Mammary epithelial cell (primary cell): ENCODE measurements at regions of chr6 and their contacts with region 1.

Region 1: GRCh38 chr6:35468181-35468979 is at the start of gene RPL10A:
- DNase-seq: peak; percentile 93
- H3K4me3 ChIP-seq: peak within 1 kb of the TSS; percentile 87 to 98 (median 95)
- H3K27ac ChIP-seq: peak within 1 kb of the TSS; percentile 81
- H3K4me1 ChIP-seq: peaks cover 19% of the 10 kb centered on the region
- H3K27me3 ChIP-seq: no peaks in the 10 kb centered on the region
- CTCF ChIP-seq: peak; percentile 88 to 98
- total RNA-seq, gene RPL10A: 961 to 1,334 TPM

Region 2: GRCh38 chr6:35148167-35148741 is 320.1 kb before region 1 on chr6:
- CTCF ChIA-PET with region 1: no interaction called
- dilution Hi-C with region 1: no loop called
- in situ Hi-C with region 1: no loop called
- intact Hi-C with region 1: no loop called
- DNase-seq: peak; percentile 48
- H3K4me3 ChIP-seq: no peak overlapping the region
- H3K27ac ChIP-seq: no peak overlapping the region
- H3K4me1 ChIP-seq: peaks cover 25% of the 10 kb centered on the region
- H3K27me3 ChIP-seq: no peaks in the 10 kb centered on the region
- CTCF ChIP-seq: no peak

Region 3: GRCh38 chr6:35297601-35298481 is 170.5 kb before region 1 on chr6 and contains the start of gene DEF6:
- CTCF ChIA-PET with region 1: no interaction called
- dilution Hi-C with region 1: no loop called
- in situ Hi-C with region 1: loop called in 1 of 2 experiments (anchors 5 kb)
- intact Hi-C with region 1: loop called (anchors 1 kb)
- DNase-seq: peak; percentile 90
- H3K4me3 ChIP-seq: peak within 1 kb of the TSS; percentile 66 to 85 (median 76)
- H3K27ac ChIP-seq: peak within 1 kb of the TSS; percentile 80
- H3K4me1 ChIP-seq: peaks cover 35% of the 10 kb centered on the region
- H3K27me3 ChIP-seq: no peaks in the 10 kb centered on the region
- CTCF ChIP-seq: peak; percentile 92 to 98
- total RNA-seq, gene DEF6: 12.8 to 32.9 TPM

Region 4: DNA sequence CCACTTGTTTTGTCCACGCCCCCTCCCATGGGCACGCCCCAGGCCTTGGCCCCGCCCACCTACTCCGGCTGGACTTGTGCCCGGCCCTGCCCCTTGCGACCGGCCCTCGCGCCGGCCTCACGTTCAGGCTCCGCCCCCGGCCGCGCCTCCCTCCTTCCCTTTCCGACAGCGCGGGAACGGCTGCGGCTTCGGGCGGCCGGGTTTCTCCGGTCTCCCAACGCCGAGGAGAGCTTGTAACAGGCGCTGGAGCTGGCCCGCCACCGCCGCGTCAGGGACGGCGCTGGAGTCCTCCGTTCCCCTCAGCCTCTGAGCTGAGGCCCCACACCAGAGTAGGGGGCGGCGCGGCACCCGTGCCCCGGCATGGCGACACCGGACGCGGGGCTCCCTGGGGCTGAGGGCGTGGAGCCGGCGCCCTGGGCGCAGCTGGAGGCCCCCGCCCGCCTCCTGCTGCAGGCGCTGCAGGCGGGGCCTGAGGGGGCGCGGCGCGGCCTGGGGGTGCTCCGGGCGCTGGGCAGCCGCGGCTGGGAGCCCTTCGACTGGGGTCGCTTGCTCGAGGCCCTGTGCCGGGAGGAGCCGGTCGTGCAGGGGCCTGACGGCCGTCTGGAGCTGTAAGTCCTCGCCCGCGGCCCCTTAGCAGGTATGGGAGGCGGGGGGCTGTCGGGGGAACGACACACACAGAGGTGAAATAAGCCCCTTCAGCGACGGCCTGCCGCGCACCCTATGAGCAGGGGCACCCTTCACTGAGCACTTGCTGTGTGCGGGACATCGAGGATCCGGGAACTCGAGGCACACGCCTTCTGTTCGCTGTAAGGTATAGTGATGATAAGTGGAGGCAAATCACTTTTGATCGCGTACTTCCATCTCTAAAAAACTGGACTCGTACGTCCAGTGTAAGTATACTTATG is 15.9 kb before region 1 on chr6 and contains the start of gene FANCE:
- CTCF ChIA-PET with region 1: interaction called, 7 read pairs
- dilution Hi-C with region 1: no loop called
- in situ Hi-C with region 1: no loop called
- intact Hi-C with region 1: loop called (anchors 1 kb)
- DNase-seq: peak; percentile 88
- H3K4me3 ChIP-seq: peak within 1 kb of the TSS; percentile 59 to 80 (median 61)
- H3K27ac ChIP-seq: peak within 1 kb of the TSS; percentile 28
- H3K4me1 ChIP-seq: peaks cover 26% of the 10 kb centered on the region
- H3K27me3 ChIP-seq: no peaks in the 10 kb centered on the region
- CTCF ChIP-seq: no peak
- total RNA-seq, gene FANCE: 3.7 to 12.8 TPM

Region 5: DNA sequence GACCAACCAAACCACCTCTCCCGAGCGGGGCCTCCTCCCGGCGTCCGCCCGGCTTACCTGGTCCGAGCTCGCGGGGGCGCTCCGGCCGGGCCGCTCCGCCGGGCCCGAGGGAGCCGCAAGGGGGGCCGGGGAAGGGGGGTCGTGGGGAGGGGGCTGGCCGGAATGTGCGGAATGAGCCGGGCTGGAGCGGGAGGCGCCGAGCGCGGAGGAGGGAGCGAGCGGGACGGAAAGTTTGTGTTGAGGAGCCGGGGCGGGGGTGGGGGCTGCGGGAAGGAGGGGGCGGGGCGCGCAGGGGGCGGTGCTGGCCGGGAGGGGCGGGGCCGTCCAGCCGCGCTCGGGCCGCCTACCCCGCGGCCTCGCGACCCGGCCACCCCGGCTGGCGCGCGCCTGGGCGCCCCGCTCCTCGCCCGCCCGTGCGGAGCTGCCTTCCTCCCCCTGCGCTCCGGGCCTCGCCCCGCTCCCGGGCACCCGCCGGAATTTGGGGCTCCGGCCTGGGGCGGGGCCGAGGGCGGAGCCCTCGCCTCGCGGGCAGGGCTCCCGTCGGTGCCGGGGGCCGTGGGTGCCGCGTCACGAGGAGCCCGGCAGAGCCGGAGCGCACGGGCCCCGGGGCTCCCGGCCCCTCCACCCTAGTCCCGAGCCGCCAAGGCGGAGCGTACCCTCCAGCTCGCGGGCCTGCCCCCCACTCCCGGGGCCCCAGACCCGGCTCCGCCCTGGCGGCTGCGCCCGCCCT is 28.6 kb after region 1 on chr6 and contains the start of gene TEAD3:
- CTCF ChIA-PET with region 1: no interaction called
- dilution Hi-C with region 1: no loop called
- in situ Hi-C with region 1: no loop called
- intact Hi-C with region 1: loop called (anchors 2 kb)
- DNase-seq: peak; percentile 76
- H3K4me3 ChIP-seq: peak within 1 kb of the TSS; percentile 69 to 88 (median 78)
- H3K27ac ChIP-seq: peak within 1 kb of the TSS; percentile 85
- H3K4me1 ChIP-seq: peaks cover 37% of the 10 kb centered on the region
- H3K27me3 ChIP-seq: no peaks in the 10 kb centered on the region
- CTCF ChIP-seq: peak in 1 of 2 donors; percentile 26
- total RNA-seq, gene TEAD3: 12.5 to 26.4 TPM

Region 6: GRCh38 chr6:35552285-35552917 is 84.0 kb after region 1 on chr6:
- CTCF ChIA-PET with region 1: no interaction called
- dilution Hi-C with region 1: no loop called
- in situ Hi-C with region 1: no loop called
- intact Hi-C with region 1: loop called (anchors 5 kb)
- DNase-seq: peak; percentile 29
- H3K4me3 ChIP-seq: no peak overlapping the region
- H3K27ac ChIP-seq: no peak overlapping the region
- H3K4me1 ChIP-seq: no peaks in the 10 kb centered on the region
- H3K27me3 ChIP-seq: no peaks in the 10 kb centered on the region
- CTCF ChIP-seq: peak; percentile 89 to 99